A549 (cell line): ENCODE measurements at regions of chr1 and their contacts with region 1.

Region 1: DNA sequence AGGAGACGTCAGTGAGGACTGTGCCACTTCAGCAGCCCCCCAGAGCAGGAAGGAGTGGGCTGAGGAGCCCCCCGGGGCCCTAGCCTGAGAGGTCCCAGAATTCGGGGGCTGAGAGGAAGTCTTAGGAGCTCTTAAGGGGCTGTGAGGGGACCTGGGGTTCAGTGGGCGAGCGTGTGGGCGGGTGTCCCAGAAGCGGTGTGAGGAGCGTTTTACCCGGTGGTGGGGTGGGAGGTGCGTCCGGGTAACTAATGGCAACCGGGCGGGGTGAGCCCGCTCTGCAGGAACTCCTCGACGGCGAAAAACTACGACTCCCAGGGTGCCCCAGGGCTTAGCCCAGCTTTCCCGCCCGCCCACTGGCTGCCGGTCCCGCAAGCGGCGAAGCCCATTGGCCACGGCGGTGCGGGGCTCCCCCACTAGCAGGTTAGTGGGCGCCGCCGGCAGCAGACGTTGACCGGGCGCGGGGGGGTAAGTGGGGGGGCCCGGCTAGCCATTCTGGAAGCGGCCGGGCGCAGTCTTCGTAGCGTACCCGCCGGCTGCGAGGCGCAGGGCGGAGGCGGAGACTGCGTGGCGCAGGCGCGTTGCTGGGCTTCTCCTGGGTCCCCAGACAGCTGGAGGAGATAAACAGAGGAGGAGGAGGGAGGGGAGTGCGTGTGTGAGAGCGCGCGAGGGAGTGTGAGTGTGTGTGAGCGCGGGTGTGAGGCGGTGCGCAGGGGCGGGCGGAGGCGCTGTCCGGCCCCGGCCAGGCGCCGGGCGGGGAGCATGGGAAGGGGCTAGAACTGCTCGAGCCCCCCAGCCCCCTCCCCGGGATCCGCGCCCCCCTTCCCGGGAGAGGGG is at the start of gene WDTC1:
- DNase-seq: peak; percentile 81 to 93
- ATAC-seq: peak; percentile 99
- H3K4me3 ChIP-seq: peak within 1 kb of the TSS; percentile 79
- H3K27ac ChIP-seq: peak within 1 kb of the TSS; percentile 74 to 88
- H3K4me1 ChIP-seq: peaks cover 8% of the 10 kb centered on the region; the same call in 2 of the 3 replicates
- CTCF ChIP-seq: no peak
- EP300 ChIP-seq: no peak
- POLR2A ChIP-seq: peak; percentile 21; the same call in 1 of the 2 replicates
- RAD21 ChIP-seq: no peak
- polyA plus RNA-seq, gene WDTC1: 3.8 and 4.0 TPM in 2 replicates

Region 2: DNA sequence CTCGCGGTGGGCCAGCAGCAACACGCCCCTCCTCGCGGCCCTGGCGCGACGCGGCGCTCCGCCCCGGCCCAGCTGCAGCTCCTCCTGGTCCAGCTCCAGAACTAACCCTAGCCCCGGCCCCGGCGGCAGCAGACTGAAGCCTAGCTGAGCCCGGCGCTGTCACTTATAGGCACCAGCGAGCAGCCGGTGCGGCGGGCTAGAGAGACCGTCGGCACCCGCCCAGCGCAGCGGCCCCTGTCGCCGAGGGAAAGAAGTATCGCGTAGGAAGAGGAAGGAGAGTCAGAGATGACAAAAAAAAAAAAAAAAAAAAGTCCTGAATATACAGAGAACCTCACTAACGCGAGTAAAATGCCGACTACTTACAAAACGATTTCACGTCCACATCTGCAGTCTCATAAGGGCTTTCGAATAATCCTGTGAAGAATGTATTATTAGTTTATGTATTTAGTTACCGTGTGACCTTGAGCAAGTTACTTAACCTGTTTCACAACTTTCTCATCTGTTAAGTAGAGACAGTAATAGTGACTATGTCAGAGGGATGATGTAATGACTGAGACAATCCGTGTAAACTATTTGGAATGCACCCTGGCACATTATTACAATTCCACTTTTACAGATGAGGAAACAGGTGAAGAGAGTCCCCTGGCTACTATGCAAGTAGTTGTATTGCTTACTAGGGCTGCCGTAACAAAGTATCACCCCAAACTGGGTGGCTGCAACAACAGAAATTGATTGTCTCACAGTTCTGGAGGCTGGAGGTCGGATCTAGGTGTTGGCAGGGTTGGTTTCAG is 79.1 kb before region 1 on chr1 and contains the start of gene SLC9A1:
- CTCF ChIA-PET with region 1: interaction called, 4 read pairs
- POLR2A ChIA-PET with region 1: interaction called, 13 read pairs
- DNase-seq: peak; percentile 60 to 90
- ATAC-seq: peak; percentile 91 to 96
- H3K4me3 ChIP-seq: peak within 1 kb of the TSS; percentile 91
- H3K27ac ChIP-seq: peak within 1 kb of the TSS; percentile 98 to 100
- H3K4me1 ChIP-seq: peaks cover 28% of the 10 kb centered on the region
- CTCF ChIP-seq: peak; percentile 63
- EP300 ChIP-seq: peak; percentile 15 to 25; a peak in 2 of 5 replicates
- POLR2A ChIP-seq: peak; percentile 97
- RAD21 ChIP-seq: peak; percentile 15 to 28; a peak in 1 of 5 replicates
- polyA plus RNA-seq, gene SLC9A1: 8.0 and 11.1 TPM in 2 replicates

Region 3: DNA sequence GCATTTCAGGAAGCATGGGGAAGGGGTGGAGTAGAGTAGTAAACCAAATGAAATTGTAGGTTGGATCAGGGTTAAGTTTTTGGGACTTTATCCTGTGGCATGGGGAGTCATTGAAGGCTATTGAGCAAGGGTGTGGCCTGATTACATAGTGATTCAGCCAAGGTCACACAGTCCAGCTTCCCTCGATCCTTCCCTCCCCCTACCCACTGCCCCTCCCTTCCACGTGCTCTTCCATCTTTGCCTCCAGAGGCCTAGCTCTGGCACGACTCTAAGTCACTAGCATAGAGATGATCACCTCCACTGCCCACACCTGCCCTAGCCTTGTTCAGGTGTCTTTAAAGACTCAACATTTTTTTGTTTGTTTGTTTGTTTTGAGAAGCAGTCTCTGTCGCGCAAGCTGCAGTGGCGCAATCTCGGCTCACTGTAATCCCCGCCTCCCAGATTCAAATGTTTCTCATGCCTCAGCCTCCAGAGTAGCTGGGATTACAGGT is 42.2 kb before region 1 on chr1:
- CTCF ChIA-PET with region 1: no interaction called
- POLR2A ChIA-PET with region 1: no interaction called
- DNase-seq: peak; percentile 58 to 88
- ATAC-seq: peak; percentile 91 to 95
- H3K4me3 ChIP-seq: no peak overlapping the region
- H3K27ac ChIP-seq: peak overlapping the region; percentile 73 to 93
- H3K4me1 ChIP-seq: peaks cover 23% of the 10 kb centered on the region
- CTCF ChIP-seq: no peak
- EP300 ChIP-seq: no peak
- POLR2A ChIP-seq: no peak
- RAD21 ChIP-seq: no peak

Region 4: GRCh38 chr1:27689423-27690173 is 455.3 kb after region 1 on chr1:
- CTCF ChIA-PET with region 1: no interaction called
- POLR2A ChIA-PET with region 1: no interaction called
- DNase-seq: no peak
- ATAC-seq: no peak
- H3K4me3 ChIP-seq: no peak overlapping the region
- H3K27ac ChIP-seq: no peak overlapping the region
- H3K4me1 ChIP-seq: no peaks in the 10 kb centered on the region
- CTCF ChIP-seq: no peak
- EP300 ChIP-seq: no peak
- POLR2A ChIP-seq: no peak
- RAD21 ChIP-seq: no peak